ENCODE measurements at regions of chrX and their contacts with region 1.

Region 1: DNA sequence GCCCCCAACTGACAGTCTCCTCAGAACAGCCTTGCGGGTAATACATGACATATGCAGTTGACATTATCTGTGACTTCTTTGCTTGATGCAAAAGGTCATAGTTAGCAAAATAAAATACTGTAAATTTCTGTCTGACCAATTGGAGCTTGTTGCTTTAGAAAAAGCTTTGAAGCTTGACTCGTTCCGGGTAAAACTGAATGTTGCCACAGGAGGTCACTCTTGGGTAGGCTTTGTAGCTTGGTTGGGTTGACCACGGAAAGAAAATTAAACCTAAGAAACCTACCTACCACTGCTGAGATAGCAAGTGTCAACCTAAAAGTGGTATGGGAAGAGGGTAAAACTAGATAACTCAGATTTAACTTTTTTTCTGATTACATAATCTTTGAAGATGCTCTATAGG is 23.2 kb downstream of the PRPS2 start:
- DNase-seq: peak; percentile 41
- H3K4me3 ChIP-seq: no peak overlapping the region
- H3K27ac ChIP-seq: no peak overlapping the region
- H3K4me1 ChIP-seq: no peaks in the 10 kb centered on the region
- H3K27me3 ChIP-seq: no peaks in the 10 kb centered on the region
- CTCF ChIP-seq: peak; percentile 35 to 53 (median 38)
- EP300 ChIP-seq: no peak
- POLR2A ChIP-seq: no peak

Region 2: DNA sequence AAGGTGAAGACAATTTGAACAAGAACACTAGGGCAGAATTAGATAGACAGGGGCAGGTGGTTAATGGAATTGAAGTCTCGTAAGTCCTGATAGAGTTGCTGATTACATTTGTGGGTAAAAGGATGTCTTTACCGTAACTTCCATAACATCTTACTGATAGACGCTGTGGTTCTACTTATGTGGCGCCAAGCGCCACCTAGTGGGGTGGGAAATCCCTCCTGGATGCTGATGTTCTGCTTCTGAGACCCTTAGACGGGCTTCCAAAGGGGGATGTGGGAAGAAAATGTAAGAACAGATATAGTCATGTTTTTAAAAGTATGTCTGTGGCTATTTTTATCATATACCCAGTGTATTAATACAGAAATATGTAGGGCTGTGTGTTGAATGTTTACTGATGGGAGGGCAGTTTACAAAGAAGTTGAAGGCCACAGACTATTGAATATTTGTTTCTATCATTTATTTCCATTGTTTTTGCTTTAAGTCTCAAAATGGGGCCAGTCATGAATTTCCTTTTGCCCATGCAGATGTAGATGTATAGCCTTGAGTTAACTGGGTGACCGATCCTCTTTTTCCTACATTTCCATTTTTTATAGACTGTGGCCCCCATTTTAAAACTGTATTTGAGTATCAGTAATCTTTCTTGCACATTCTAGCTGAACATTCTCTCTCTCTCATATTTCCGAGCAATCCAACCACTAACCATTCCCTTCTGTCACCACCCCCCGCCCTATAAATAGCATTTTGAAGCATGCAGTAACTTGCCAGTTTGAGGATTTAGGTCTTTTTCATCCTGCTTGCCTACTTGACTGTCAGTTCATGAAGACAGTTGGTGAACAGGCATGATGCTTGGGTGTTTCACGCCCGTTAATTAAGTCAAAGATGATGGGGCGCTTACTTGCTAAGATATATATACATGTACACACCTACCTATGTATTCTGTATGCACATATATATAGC is 79.9 kb after region 1 on chrX:
- in situ Hi-C with region 1: no loop called
- intact Hi-C with region 1: loop called (anchors 10 kb)
- DNase-seq: peak; percentile 37
- H3K4me3 ChIP-seq: no peak overlapping the region
- H3K27ac ChIP-seq: no peak overlapping the region
- H3K4me1 ChIP-seq: no peaks in the 10 kb centered on the region
- H3K27me3 ChIP-seq: no peaks in the 10 kb centered on the region
- CTCF ChIP-seq: peak; percentile 48 to 62 (median 55)
- EP300 ChIP-seq: no peak
- POLR2A ChIP-seq: no peak

Region 3: DNA sequence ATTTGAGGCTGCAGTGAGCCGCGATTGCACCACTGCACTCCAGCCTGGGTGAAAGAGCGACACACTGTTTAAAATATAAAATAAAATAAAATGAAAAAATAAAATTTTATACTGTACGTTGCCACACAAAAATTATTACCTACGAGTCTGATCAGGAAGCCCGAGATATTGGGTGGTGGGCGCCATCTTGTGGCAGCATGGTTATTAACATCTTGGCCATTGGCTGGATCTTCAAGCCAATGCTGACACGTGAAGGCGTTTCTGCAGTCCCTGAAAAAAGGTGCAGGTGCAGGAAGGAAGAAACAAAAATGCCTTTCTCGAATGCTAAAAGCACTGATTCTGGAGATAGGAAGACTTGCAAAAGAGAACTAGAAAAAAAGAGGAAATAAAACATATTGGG is 87.1 kb after region 1 on chrX:
- in situ Hi-C with region 1: loop called in 1 of 4 experiments (anchors 25 kb)
- intact Hi-C with region 1: loop called (anchors 10 kb)
- DNase-seq: peak; percentile 74
- H3K4me3 ChIP-seq: no peak overlapping the region
- H3K27ac ChIP-seq: no peak overlapping the region
- H3K4me1 ChIP-seq: no peaks in the 10 kb centered on the region
- H3K27me3 ChIP-seq: no peaks in the 10 kb centered on the region
- CTCF ChIP-seq: peak; percentile 47 to 65 (median 55)
- EP300 ChIP-seq: no peak
- POLR2A ChIP-seq: no peak

Measured in transverse colon (tissue), 4 donors.